Cardiac septum (tissue), 1 donor: ENCODE measurements at regions of chr1 and their contacts with region 1.

Region 1: DNA sequence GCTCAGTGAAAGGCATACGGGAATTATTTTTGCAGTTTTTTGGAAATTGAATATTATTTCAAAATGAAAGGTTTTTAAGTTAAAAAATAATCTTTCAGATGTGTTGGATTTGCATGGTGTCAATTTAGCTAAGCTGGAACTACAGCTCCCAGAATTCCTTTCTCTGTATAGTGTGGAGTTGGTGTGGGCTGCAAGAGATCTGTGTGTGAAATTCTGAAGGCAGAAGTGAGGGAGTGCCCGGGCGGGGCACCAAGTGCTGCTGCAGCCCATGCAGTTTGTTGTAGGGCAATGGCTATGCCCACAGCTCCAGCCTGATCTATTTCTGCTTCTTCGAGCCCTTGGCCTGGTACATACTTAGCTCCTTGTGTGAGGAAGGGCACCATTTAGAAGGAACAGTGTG is 60.5 kb upstream of the CSF1 start:
- DNase-seq: no peak

Region 2: GRCh38 chr1:109556563-109556962 is 293.6 kb before region 1 on chr1:
- intact Hi-C with region 1: no loop called
- DNase-seq: no peak

Region 3: DNA sequence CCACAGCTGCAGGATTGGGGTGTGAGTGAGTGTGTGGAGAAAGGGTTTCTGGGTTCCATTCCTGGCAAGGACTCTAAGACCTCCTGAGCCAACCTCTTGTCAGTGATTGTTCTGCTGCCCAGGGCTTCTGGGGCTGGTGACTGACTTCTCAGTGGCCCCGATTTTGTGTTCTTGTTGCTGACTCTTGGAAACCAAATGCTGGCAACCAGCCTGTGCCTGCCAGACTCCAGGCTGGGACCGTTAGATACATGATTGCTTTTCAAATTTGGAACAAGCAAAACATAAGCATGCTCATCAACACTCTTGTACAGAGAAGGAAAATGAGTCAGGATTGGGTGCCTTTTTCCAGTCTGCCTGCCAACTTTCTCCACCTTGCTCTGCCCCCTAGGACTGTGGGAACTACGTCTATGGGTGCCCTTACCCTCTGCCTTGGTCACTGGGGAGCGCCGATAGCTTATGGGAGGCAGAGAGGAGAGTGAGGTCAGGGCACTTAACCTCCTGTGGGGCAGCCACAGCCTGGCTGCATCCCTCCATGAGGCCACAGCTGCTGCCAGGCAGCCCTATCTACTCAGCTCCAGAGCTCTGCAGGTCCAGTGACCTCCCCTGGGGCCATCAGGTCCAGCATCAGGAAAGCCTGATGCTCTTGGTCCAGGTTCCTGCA is 47.2 kb before region 1 on chr1:
- intact Hi-C with region 1: no loop called
- DNase-seq: peak; percentile 66

Region 4: GRCh38 chr1:109895720-109896504 is 45.7 kb after region 1 on chr1:
- intact Hi-C with region 1: loop called (anchors 5 kb)
- DNase-seq: peak; percentile 91

Region 5: DNA sequence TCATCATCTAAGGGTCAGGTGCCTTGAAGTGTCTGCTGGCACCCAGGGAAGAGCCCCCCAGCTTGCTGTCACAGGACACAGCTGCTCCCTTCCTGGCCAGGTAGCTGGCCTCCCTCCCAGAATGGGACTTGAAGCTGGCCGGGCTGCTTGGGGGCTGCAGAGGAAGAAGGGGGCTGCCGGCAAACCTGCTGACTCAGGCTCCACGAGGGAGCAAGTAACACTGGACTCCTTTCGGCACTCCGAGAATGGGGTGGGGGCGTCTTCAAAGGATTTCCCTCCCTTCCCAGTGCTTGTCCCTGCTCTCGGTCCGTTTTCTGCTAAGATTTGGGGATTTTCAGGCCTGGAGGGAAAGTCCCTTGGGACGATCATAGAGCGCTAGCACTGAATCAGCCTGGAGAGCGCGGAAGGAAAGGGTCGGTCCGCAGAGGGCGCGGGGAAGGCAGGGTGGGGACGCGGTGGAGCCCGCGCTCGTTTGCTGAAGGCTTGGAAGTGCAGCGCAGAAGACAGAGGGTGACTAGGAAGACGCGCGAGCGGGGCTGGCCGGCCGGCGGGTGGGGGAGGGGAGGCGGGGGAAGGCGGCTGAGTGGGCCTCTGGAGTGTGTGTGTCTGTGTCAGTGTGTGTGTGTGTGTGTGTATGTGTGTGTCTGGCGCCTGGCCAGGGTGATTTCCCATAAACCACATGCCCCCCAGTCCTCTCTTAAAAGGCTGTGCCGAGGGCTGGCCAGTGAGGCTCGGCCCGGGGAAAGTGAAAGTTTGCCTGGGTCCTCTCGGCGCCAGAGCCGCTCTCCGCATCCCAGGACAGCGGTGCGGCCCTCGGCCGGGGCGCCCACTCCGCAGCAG is 60.1 kb after region 1 on chr1 and contains the start of gene CSF1:
- intact Hi-C with region 1: loop called (anchors 5 kb)
- DNase-seq: peak; percentile 89
- total RNA-seq, gene CSF1: 16.7 TPM